Activated naive CD4-positive, alpha-beta T cell treated with anti-CD3 and anti-CD28 coated beads, Interleukin-2, amount 10 ng/mL, durations not matched to agents 7 days and 5 days (primary cell): ENCODE measurements at regions of chr11 and their contacts with region 1.

Region 1: DNA sequence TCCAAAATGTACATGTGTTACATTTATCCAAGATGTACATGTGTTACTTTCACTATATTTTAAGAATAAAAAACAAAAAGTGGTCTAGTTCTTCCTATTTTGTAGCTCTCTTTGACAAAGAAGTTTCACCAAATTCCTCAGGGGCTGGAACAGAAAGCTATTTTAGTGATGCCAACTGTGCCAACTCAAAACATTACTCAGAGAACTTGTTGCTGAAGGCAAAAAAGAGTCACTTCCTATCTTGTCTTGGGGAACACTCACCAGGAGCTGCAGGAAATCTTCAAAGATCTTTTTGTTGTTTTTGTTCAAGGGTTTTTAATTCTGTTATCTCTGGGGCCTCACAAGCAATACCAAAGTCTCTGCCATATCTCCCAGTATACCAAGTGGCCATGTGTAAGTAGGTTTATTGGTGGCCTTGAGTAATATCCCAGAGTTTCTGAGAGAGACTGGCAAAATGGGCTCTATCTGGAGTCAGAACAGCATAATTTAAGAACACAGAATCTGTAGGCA is 13.6 kb upstream of the EED start:
- DNase-seq: no peak
- H3K4me3 Mint-ChIP-seq: no peak overlapping the region
- H3K27ac Mint-ChIP-seq: no peak overlapping the region
- H3K4me1 Mint-ChIP-seq: peaks cover 13% of the 10 kb centered on the region
- H3K27me3 Mint-ChIP-seq: peaks cover 9% of the 10 kb centered on the region

Region 2: GRCh38 chr11:86068951-86069407 is 162.0 kb before region 1 on chr11 and contains the start of gene PICALM:
- CTCF ChIA-PET with region 1: no interaction called
- DNase-seq: peak; percentile 98
- H3K4me3 Mint-ChIP-seq: peak within 1 kb of the TSS; percentile 99
- H3K27ac Mint-ChIP-seq: peak within 1 kb of the TSS; percentile 94
- H3K4me1 Mint-ChIP-seq: peaks cover 33% of the 10 kb centered on the region
- H3K27me3 Mint-ChIP-seq: no peaks in the 10 kb centered on the region

Region 3: DNA sequence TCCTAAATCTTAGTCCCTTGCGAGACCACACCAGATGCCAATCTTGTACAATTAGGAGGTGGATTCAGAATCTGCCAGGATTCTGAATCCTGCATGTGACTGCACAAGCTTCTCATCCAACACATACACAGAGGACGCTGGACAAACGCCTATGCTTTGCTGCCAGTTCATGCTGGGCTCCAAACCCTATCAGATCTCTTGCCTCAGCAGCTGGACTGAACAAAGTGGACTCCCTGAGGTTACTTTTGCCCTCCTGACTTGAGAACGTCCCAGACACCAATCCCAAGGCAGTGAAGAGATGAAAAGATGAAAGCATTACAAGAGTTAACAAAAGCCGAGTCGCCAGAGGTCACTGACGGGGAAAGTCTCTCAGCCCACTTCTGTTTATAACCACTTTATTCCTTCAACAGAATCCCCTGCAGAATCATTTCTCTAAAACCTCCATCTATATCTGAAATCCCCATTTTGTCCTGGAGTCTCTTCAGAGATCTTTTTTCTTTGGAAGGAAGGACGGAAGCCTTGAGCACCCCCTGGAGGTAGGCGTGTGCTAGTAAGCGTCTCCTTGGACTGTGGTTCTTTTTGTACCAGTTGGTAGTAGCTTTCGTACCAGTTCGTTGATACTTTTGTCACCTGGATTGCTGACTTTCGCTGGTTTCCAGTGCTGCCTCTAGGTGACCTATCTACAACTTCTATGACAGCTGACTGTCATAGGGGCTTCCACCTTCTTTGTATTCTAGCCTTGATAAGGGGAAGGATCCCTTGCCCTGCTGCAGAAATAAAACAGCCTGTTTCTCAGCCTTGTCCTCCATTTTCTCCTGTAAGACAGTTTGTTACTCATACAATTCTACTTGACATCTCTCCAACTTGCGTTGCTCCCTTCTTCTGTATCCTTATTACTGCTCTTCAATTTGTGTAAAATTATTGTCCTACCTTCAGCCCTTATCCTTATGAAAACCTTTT is 12.6 kb before region 1 on chr11:
- CTCF ChIA-PET with region 1: interaction called, 11 read pairs
- DNase-seq: peak; percentile 73
- H3K4me3 Mint-ChIP-seq: peak overlapping the region; percentile 48
- H3K27ac Mint-ChIP-seq: no peak overlapping the region
- H3K4me1 Mint-ChIP-seq: peaks cover 28% of the 10 kb centered on the region
- H3K27me3 Mint-ChIP-seq: no peaks in the 10 kb centered on the region

Region 4: GRCh38 chr11:86255896-86256295 is 24.9 kb after region 1 on chr11:
- CTCF ChIA-PET with region 1: no interaction called
- DNase-seq: no peak
- H3K4me3 Mint-ChIP-seq: no peak overlapping the region
- H3K27ac Mint-ChIP-seq: no peak overlapping the region
- H3K4me1 Mint-ChIP-seq: peaks cover 16% of the 10 kb centered on the region
- H3K27me3 Mint-ChIP-seq: no peaks in the 10 kb centered on the region